ENCODE measurements at regions of chr16 and their contacts with region 1.

Region 1: DNA sequence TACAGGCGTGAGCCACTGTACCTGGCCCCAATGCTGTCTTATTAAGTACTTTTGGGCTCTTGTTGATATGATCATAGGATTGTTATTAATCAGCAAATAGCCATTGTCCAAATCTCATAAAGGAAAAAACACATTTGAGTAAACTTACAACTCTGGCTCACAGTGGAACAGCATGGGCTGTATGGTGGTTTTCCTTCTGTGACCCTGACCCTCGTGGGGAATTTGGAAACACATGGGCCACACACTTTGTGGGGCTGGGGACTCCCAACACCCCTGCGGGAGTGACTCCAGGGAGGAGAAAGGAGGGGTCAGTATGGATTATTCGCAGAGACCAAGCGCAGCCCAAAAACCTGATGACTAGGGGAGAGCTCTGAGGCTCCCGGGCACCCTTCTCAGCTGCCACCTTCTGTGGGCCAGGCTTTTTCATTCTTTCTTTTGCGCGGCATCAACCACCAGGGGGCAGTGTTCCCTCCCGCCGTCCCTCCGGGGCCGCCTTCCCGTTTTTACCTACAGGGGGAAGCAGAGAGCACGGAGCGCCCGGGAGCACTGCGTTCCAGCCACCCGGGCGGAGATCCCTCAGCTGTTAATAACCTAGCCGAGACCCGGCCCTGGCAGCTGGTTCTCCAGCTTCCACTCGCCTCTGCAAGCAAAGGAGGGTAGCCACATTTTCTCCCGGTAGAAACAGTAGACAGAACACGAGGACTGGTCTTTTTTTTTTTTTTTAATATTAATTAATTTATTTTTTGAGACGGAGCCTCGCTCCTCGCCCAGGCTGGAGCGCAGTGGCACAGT is 9.7 kb downstream of the TSNAXIP1 start:
- DNase-seq: peak; percentile 90
- ATAC-seq: peak; percentile 99
- H3K4me3 Mint-ChIP-seq: peak overlapping the region; percentile 29
- H3K27ac Mint-ChIP-seq: no peak overlapping the region
- H3K4me1 Mint-ChIP-seq: peaks cover 5% of the 10 kb centered on the region
- H3K27me3 Mint-ChIP-seq: no peaks in the 10 kb centered on the region
- CTCF ChIP-seq: peak; percentile 100

Region 2: GRCh38 chr16:67719048-67719777 is 97.2 kb before region 1 on chr16 and contains the start of gene GFOD2:
- CTCF ChIA-PET with region 1: interaction called, 15 read pairs
- POLR2A ChIA-PET with region 1: no interaction called
- intact Hi-C with region 1: no loop called
- DNase-seq: peak; percentile 98
- ATAC-seq: peak; percentile 98
- H3K4me3 Mint-ChIP-seq: peak within 1 kb of the TSS; percentile 84
- H3K27ac Mint-ChIP-seq: peak within 1 kb of the TSS; percentile 98
- H3K4me1 Mint-ChIP-seq: peaks cover 32% of the 10 kb centered on the region
- H3K27me3 Mint-ChIP-seq: no peaks in the 10 kb centered on the region
- CTCF ChIP-seq: no peak
- total RNA-seq, gene GFOD2: 11.6 to 14.1 TPM

Region 3: GRCh38 chr16:67833418-67834241 is 17.2 kb after region 1 on chr16:
- CTCF ChIA-PET with region 1: interaction called, 132 read pairs
- POLR2A ChIA-PET with region 1: interaction called, 6 read pairs
- intact Hi-C with region 1: no loop called
- DNase-seq: peak; percentile 98
- ATAC-seq: peak; percentile 100
- H3K4me3 Mint-ChIP-seq: peak overlapping the region; percentile 89
- H3K27ac Mint-ChIP-seq: peak overlapping the region; percentile 76
- H3K4me1 Mint-ChIP-seq: peaks cover 12% of the 10 kb centered on the region
- H3K27me3 Mint-ChIP-seq: no peaks in the 10 kb centered on the region
- CTCF ChIP-seq: no peak

Region 4: DNA sequence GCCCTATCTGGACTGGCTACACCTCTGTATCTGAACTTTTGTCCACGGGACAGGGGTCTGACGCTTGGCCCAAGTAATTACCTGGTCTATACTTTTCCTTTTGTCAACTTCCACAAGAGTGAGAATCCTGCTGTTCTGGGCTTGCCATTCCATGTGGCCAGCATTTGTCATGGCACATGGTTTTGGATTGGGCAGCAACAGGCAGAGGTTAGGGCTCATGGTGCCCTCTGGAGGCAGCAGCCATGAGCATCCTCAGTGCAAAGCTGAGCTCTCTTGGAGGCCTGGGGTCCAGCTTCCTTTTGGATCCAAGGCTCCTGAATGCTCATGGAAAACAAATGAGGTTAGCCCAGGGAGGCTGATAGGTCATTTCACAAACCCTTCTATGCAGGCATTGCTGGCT is 48.9 kb after region 1 on chr16:
- CTCF ChIA-PET with region 1: interaction called, 16 read pairs
- POLR2A ChIA-PET with region 1: no interaction called
- intact Hi-C with region 1: no loop called
- DNase-seq: peak; percentile 30
- ATAC-seq: peak; percentile 64
- H3K4me3 Mint-ChIP-seq: no peak overlapping the region
- H3K27ac Mint-ChIP-seq: no peak overlapping the region
- H3K4me1 Mint-ChIP-seq: no peaks in the 10 kb centered on the region
- H3K27me3 Mint-ChIP-seq: no peaks in the 10 kb centered on the region
- CTCF ChIP-seq: peak; percentile 33

Region 5: DNA sequence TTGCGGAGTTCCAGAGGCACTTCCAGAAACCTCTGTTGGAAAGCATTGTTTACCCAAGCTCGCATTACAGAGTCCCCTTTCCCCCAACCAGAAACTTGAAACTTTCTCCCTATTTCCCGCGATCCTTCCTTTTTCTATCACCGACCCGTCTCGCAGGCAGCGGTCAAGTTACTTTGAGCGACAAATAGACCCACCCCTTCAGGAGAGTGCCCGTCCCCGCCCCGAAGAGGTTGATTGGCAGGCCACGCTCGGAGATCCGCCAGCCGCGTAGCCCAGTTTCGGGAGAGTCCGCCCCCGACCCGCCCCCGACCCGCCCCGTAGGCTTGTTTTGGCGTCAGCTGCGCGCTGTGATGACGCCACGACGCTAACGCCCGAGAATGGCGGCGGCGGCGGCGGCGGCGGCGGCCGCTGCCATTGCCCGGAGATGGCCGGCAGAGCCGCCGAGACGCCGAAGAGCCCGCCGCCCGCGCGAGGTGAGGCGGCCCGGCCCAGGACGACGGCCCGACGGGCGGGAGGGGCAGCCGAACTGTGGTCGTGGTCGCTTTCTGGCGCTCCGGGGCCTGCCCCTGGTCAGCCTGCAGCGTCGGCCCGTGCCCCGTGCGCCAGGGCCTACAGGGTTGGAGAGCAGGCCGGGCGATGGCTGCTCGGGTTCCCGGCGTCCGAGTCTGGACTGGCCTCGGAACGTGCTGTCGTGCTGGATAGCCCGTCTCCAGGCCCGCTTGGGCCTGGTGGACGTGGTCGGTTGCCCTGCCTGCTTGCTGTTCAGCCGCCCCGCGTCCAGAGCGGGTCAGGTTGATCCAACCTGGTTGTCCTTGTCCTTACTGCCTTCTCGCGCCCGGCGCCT is 76.7 kb after region 1 on chr16 and contains the start of gene PSKH1:
- CTCF ChIA-PET with region 1: interaction called, 15 read pairs
- POLR2A ChIA-PET with region 1: no interaction called
- intact Hi-C with region 1: no loop called
- DNase-seq: peak; percentile 97
- ATAC-seq: peak; percentile 100
- H3K4me3 Mint-ChIP-seq: peak within 1 kb of the TSS; percentile 97
- H3K27ac Mint-ChIP-seq: peak within 1 kb of the TSS; percentile 95
- H3K4me1 Mint-ChIP-seq: peaks cover 26% of the 10 kb centered on the region
- H3K27me3 Mint-ChIP-seq: no peaks in the 10 kb centered on the region
- CTCF ChIP-seq: no peak
- total RNA-seq, gene PSKH1: 8.4 to 8.5 TPM

Region 6: DNA sequence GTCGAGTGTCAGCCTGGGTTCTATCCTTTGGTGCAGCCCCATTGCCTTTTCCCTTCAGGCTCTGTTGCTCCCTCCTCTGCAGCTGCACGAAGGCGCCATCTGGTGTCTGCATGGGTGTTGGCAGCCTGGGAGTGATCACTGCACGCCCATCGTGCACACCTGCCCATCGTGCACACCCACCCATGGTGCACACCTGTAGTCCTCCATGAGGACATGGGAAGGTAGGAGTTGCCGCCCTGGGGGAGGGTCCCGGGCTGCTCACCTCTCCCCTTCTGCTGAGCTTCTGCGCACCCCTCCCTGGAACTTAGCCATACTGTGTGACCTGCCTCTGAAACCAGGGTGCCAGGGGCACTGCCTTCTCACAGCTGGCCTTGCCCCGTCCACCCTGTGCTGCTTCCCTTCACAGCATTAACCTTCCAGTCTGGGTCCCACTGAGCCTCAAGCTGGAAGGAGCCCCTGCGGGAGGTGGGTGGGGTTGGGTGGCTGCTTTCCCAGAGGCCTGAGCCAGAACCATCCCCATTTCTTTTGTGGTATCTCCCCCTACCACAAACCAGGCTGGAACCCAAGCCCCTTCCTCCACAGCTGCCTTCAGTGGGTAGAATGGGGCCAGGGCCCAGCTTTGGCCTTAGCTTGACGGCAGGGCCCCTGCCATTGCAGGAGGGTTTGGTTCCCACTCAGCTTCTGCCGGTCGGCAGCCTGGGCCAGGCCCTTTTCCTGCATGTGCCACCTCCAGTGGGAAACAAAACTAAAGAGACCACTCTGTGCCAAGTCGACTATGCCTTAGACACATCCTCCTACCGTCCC is 112.3 kb after region 1 on chr16:
- CTCF ChIA-PET with region 1: interaction called, 28 read pairs
- POLR2A ChIA-PET with region 1: no interaction called
- intact Hi-C with region 1: loop called (anchors 5 kb)
- DNase-seq: peak; percentile 87
- ATAC-seq: peak; percentile 96
- H3K4me3 Mint-ChIP-seq: no peak overlapping the region
- H3K27ac Mint-ChIP-seq: no peak overlapping the region
- H3K4me1 Mint-ChIP-seq: peaks cover 1% of the 10 kb centered on the region
- H3K27me3 Mint-ChIP-seq: no peaks in the 10 kb centered on the region
- CTCF ChIP-seq: peak; percentile 93

Region 7: GRCh38 chr16:68028996-68029395 is 212.6 kb after region 1 on chr16:
- CTCF ChIA-PET with region 1: interaction called, 11 read pairs
- POLR2A ChIA-PET with region 1: interaction called, 3 read pairs
- intact Hi-C with region 1: no loop called
- DNase-seq: no peak
- ATAC-seq: no peak
- H3K4me3 Mint-ChIP-seq: no peak overlapping the region
- H3K27ac Mint-ChIP-seq: no peak overlapping the region
- H3K4me1 Mint-ChIP-seq: peaks cover 14% of the 10 kb centered on the region
- H3K27me3 Mint-ChIP-seq: no peaks in the 10 kb centered on the region
- CTCF ChIP-seq: no peak

Measured in activated CD8-positive, alpha-beta T cell treated with anti-CD3 and anti-CD28 coated beads for 36 hours (primary cell).